ENCODE measurements at regions of chr1 and their contacts with region 1.

Region 1: GRCh38 chr1:184386312-184387068 is at the start of gene C1orf21:
- DNase-seq: peak; percentile 91
- ATAC-seq: peak; percentile 97 to 98
- total RNA-seq, gene C1orf21: 61.3 to 80.7 TPM

Region 2: DNA sequence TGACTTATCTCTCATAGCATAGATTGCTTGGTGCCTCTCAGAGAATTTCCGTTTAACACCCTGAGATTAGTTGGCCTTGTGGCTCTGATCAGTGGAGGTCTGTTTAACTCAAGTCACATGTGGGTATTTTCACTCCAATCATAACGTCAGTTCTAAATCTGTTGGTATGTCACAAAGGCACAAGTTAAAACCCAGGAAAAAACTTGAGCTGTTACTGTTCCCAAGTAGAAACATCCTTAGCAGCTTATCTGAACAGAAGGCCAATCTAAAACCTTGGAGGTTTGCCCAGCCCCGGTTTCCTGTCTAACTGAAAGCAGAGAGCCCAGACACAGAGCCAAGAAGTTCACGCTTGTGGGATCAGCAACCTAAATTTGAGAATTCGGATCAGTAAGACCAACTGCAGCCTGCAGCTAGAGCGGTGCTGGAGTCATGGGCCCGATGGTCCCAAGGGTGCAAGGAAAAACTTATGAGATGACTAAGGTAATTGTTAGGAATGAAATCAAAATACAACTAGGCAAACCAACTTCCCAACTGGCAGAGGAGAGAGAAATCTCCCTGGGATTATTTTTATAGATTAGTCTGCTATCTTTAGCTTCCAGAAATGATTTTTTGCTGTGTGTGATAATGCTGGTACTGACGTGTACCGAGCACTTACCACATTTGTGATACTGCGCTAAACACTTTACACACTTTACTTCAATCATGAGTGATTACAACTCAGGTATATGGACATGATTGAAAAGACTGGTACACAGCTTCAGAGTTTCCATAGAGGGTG is 89.8 kb before region 1 on chr1:
- intact Hi-C with region 1: loop called in 1 of 2 experiments (anchors 2 kb)
- DNase-seq: peak; percentile 96
- ATAC-seq: peak; percentile 92 to 93

Region 3: DNA sequence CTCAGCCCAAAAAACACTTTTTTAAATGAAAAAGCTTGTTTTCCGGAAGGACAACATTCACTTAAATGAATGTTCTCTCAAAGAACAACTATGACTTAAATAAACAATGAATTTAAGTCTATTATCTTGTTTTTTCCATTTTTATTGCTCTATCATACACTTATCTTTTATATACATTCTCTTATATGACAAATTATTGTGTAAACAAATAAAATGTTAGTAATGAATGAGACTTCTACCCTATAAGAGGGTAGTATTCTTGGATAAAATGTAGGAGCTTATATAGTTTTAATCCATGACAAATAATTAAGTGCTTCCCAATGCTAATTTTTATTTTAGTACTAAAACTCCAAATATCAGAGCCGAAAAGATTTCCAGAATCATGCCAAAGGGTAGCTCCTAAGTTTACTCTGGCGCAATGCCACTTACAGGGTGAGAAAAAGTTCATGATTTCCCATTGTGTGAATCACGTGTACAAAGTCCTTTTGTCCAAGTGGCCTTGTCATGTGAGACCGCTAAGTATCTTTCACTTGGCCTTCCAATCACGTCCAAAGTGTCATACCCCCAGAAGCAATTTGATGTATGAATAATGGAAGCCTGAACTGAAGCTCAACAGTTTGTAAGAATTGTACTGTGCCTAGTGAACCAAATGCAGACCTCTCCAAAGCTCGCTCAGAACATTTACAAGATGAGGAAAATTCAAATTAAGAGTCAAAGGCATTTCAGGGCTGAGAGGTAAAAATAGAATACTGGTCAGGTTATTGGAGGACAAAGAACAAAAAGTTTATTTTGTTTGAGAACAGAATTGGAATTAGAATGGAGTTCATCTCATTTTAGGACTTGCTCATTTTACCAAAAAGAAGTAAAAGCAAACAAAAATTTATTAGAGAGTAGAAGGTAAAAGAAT is 56.3 kb before region 1 on chr1:
- intact Hi-C with region 1: no loop called
- DNase-seq: peak; percentile 35
- ATAC-seq: peak; percentile 44 to 65

Region 4: DNA sequence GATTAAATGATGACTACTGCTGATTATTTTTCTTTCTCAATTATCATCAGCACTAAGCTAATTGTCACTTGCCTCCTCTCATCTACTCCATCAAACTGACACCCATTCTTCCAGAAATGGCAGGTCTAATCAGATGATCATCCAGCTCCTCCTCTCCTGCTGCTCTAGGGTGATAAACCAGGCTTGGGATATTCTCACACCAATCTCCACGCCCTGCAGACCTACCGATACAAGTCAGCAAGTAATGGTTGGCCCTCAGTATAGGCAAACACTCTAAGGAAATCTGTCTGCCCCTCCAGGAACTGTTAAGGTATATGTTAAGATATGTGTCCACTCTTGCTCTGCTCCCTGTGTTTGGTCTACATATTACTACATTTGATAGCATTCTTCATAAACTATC is 35.9 kb before region 1 on chr1:
- intact Hi-C with region 1: no loop called
- DNase-seq: no peak
- ATAC-seq: no peak

Region 5: GRCh38 chr1:184465489-184466146 is 79.1 kb after region 1 on chr1:
- intact Hi-C with region 1: loop called in 1 of 2 experiments (anchors 5 kb)
- DNase-seq: peak; percentile 49
- ATAC-seq: peak in 1 of 2 donors; percentile 83

Region 6: GRCh38 chr1:184513966-184514365 is 127.5 kb after region 1 on chr1:
- intact Hi-C with region 1: no loop called
- DNase-seq: no peak
- ATAC-seq: peak; percentile 59 to 91

Measured in left cardiac atrium (tissue), 4 donors.